PC-9 (cell line): ENCODE measurements at regions of chr4 and their contacts with region 1.

Region 1: DNA sequence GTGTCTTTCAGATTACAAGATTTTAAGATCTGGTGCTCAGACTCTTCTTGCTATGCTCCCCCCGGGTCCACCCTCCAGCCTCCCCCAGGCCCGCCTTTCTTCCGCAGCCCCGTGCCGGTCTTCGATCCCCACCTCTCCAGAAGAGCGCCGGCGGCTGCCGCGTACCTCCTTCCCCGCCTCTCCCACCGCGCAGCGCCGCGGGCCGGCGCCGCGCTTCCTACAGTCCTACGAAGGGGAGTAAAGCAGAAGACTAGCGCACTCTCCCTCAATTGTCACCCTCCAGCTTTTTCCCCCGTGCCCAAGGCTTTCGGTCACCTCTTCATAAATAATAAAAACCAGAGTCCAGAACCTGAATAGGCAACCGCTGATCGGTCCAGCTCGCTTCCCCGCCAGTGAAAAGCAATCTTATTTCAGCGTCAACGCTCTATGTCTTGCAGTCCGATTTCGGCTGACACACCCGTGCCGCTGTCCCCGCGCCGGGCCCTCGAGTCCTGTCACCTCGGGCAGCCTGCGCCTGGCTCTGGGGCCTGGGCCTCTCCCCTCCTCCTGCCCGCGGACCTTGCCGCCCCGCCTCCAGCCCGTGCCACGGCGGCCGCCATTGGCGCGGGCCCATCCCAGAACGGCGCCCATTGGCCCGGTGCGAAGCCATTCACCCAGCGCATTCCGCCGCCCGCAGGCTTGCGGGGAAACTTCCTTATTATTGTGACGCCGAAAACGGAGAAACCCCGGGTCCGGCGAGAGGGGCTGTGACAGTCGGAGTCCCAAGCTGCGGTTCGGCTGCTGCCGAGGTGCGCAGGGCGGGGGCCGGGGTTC is at the start of gene HERC3:
- DNase-seq: peak; percentile 59 to 87
- H3K4me3 ChIP-seq: peak within 1 kb of the TSS; percentile 70
- H3K27ac ChIP-seq: peak within 1 kb of the TSS; percentile 50
- H3K4me1 ChIP-seq: 0 out of 2 replicates have a peak, but pooled peaks cover 8% of the 10 kb centered on the region
- H3K27me3 ChIP-seq: no peaks in the 10 kb centered on the region
- CTCF ChIP-seq: no peak
- total RNA-seq, gene HERC3: 14.7 and 16.9 TPM in 2 replicates

Region 2: DNA sequence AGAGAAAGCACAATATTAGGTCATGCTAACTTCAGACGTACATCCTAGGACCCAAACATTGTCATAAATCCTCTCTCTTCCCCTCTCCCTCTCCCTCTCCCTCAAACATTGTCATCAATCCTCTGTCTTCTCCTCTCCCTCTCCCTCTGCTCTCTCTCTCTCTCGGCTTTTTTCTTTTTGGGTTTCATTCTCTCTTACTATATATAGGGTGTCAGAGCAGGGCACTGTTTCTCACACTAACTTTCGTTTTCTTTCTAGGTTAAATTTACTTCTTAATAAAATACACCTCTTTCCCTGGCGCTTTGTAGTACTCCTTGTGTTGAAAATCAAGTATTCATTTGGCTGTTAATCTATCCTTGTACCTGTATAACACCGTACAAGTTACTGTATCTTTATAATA is 172.1 kb before region 1 on chr4:
- CTCF ChIA-PET with region 1: no interaction called
- POLR2A ChIA-PET with region 1: no interaction called
- intact Hi-C with region 1: no loop called
- DNase-seq: no peak
- H3K4me3 ChIP-seq: no peak overlapping the region
- H3K27ac ChIP-seq: no peak overlapping the region
- H3K4me1 ChIP-seq: peaks cover 8% of the 10 kb centered on the region
- H3K27me3 ChIP-seq: no peaks in the 10 kb centered on the region
- CTCF ChIP-seq: no peak

Region 3: DNA sequence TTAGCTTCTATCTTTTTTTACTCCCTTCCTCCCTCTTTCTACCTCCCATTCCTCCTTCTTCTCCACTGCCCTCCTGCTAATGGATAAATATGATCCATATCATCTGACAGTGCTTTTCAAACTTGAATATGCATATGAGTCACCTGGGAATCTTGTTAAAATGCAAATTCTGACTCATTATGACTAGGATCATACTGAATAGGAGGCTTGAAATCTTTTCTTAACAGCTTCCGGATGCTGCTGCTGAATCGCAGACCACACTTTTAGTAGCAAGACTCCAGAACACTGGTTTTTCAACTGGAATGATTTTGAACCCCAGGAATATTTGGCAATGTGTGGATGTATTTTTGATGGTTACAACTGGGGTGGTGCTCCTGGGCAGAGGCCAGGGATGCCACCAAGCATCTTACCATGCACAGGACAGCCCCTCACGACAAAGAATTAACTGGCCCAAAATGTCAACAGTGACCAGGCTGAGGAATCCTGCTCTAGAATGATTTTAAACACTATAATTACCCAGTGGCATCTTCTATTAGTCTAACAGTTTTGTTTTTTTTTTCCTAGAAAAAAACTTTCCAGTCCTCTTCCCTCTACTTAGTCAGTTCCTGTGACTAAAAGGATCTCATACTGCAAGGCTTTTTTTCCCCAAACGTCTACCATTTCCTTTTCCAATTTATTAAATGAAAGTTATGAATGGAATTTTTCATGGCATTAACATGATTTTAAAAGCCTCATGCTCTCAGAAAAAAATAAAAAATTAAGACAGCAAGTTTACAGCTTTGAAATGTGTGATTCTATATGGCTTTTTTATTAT is 57.8 kb before region 1 on chr4:
- CTCF ChIA-PET with region 1: interaction called, 3 read pairs
- POLR2A ChIA-PET with region 1: no interaction called
- intact Hi-C with region 1: loop called (anchors 5 kb)
- DNase-seq: peak in 1 of 2 experiments; percentile 55
- H3K4me3 ChIP-seq: no peak overlapping the region
- H3K27ac ChIP-seq: 0 out of 2 replicates have a peak overlapping the region, but pooled peaks have one; percentile 30
- H3K4me1 ChIP-seq: peaks cover 3% of the 10 kb centered on the region; the same call in 1 of the 2 replicates
- H3K27me3 ChIP-seq: no peaks in the 10 kb centered on the region
- CTCF ChIP-seq: no peak

Region 4: GRCh38 chr4:88964450-88964849 is 372.5 kb after region 1 on chr4:
- CTCF ChIA-PET with region 1: no interaction called
- POLR2A ChIA-PET with region 1: interaction called, 12 read pairs
- intact Hi-C with region 1: no loop called
- DNase-seq: peak; percentile 1 to 73
- H3K4me3 ChIP-seq: no peak overlapping the region
- H3K27ac ChIP-seq: peak overlapping the region; percentile 87
- H3K4me1 ChIP-seq: peaks cover 56% of the 10 kb centered on the region
- H3K27me3 ChIP-seq: no peaks in the 10 kb centered on the region
- CTCF ChIP-seq: no peak